Common myeloid progenitor, CD34-positive (primary cell): ENCODE measurements at regions of chr7 and their contacts with region 1.

Region 1: GRCh38 chr7:40057292-40057691 is 77.1 kb downstream of the MPLKIP start:
- DNase-seq: peak in 1 of 3 donors; percentile 10
- H3K4me3 ChIP-seq: no peak overlapping the region
- H3K27ac ChIP-seq: no peak overlapping the region
- H3K4me1 ChIP-seq: no peaks in the 10 kb centered on the region
- H3K27me3 ChIP-seq: no peaks in the 10 kb centered on the region

Region 2: GRCh38 chr7:39580149-39580874 is 477.0 kb before region 1 on chr7:
- CTCF ChIA-PET with region 1: interaction called, 12 read pairs
- POLR2A ChIA-PET with region 1: no interaction called
- DNase-seq: peak; percentile 92 to 96 (median 93)
- H3K4me3 ChIP-seq: no peak overlapping the region
- H3K27ac ChIP-seq: no peak overlapping the region
- H3K4me1 ChIP-seq: peaks cover 0 to 6% (median 3%) of the 10 kb centered on the region in 4 experiments
- H3K27me3 ChIP-seq: no peaks in the 10 kb centered on the region

Region 3: DNA sequence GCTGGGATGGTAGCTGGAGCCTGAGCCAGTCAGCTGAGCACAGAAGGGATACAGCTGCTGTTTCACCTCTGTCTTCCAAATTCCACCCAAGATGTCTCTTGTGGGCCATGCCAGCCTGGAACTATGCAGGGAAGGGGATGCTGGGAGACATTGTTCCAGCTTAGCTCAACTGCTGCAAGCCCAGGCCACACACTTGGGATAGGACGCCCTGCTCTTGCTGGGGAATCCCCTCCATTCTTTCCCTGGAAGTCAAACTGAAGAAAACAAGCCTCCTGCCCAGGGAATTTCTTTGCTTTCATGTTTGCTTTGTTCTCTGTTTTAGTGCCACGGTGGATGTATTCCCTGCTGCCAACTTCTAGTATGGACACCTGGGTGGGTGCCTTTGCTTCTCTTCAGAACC is 162.4 kb before region 1 on chr7:
- CTCF ChIA-PET with region 1: interaction called, 84 read pairs
- POLR2A ChIA-PET with region 1: no interaction called
- DNase-seq: no peak
- H3K4me3 ChIP-seq: no peak overlapping the region
- H3K27ac ChIP-seq: no peak overlapping the region
- H3K4me1 ChIP-seq: peaks cover 0 to 3% (median under 1%) of the 10 kb centered on the region in 4 experiments
- H3K27me3 ChIP-seq: no peaks in the 10 kb centered on the region

Region 4: GRCh38 chr7:39958038-39958437 is 99.3 kb before region 1 on chr7:
- CTCF ChIA-PET with region 1: interaction called, 25 read pairs
- POLR2A ChIA-PET with region 1: no interaction called
- DNase-seq: no peak
- H3K4me3 ChIP-seq: no peak overlapping the region
- H3K27ac ChIP-seq: no peak overlapping the region
- H3K4me1 ChIP-seq: peaks cover 11 to 28% (median 16%) of the 10 kb centered on the region in 4 experiments
- H3K27me3 ChIP-seq: no peaks in the 10 kb centered on the region

Region 5: GRCh38 chr7:40003597-40003996 is 53.7 kb before region 1 on chr7:
- CTCF ChIA-PET with region 1: interaction called, 10 read pairs
- POLR2A ChIA-PET with region 1: no interaction called
- DNase-seq: no peak
- H3K4me3 ChIP-seq: no peak overlapping the region
- H3K27ac ChIP-seq: no peak overlapping the region
- H3K4me1 ChIP-seq: no peaks in the 10 kb centered on the region
- H3K27me3 ChIP-seq: no peaks in the 10 kb centered on the region

Region 6: GRCh38 chr7:40041456-40041855 is 15.8 kb before region 1 on chr7:
- CTCF ChIA-PET with region 1: interaction called, 10 read pairs
- POLR2A ChIA-PET with region 1: no interaction called
- DNase-seq: no peak
- H3K4me3 ChIP-seq: no peak overlapping the region
- H3K27ac ChIP-seq: no peak overlapping the region
- H3K4me1 ChIP-seq: no peaks in the 10 kb centered on the region
- H3K27me3 ChIP-seq: no peaks in the 10 kb centered on the region